ENCODE measurements at regions of chr7 and their contacts with region 1.

Region 1: DNA sequence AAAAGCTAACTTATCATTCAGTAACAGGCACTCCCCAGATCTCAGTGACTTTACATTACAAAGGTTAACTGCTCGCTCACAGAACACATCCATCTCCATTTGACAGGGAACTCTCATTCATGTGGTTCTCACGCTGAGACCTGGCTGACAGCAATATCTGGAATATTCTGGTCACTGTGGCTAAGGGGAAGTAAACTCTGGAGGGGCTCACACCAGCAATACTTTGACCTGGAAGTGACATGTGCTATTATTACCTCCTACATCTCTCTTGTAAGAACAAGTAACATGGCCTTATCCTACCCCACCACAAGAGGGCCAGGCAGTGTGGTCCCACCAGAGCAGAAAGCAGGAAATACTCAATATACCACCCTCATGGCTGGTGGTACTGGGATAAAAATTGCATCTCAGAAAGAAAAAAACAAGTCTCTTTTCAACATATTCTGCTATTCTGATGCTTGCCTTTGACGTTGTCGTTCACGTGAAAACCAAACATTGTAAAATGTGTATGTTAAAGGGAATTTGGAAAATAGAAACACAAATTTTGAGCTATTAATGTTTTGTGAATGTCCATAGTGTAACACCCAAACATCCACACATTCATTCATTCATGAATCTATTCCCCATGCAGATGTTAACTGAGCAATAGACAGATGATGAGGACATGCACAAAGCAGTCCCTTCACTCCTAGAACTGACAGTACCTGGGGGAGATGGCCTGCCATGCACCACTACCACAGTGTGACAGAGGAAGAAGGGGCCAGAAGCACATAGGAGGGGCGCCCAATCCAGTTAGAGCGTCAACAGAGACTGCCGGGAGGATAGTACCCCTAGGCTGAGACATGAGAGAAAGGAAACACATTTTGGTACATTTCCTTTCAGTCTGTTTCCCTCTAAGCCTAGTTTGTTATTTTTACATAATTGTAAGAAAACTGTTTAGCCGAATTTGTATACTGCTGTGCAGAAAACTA is 166.0 kb upstream of the SP4 start:
- DNase-seq: peak; percentile 24 to 74 (median 43)
- H3K4me3 ChIP-seq: no peak overlapping the region
- H3K4me3 Mint-ChIP-seq: no peak overlapping the region
- H3K27ac ChIP-seq: no peak overlapping the region
- H3K27ac Mint-ChIP-seq: peak overlapping the region in 4 of 8 donors; percentile 22 to 91 (median 54)
- H3K4me1 ChIP-seq: peaks cover 9% of the 10 kb centered on the region
- H3K4me1 Mint-ChIP-seq: peaks cover 11 to 13% (median 12%) of the 10 kb centered on the region in 3 donors
- H3K27me3 ChIP-seq: no peaks in the 10 kb centered on the region
- H3K27me3 Mint-ChIP-seq: no peaks in the 10 kb centered on the region

Region 2: DNA sequence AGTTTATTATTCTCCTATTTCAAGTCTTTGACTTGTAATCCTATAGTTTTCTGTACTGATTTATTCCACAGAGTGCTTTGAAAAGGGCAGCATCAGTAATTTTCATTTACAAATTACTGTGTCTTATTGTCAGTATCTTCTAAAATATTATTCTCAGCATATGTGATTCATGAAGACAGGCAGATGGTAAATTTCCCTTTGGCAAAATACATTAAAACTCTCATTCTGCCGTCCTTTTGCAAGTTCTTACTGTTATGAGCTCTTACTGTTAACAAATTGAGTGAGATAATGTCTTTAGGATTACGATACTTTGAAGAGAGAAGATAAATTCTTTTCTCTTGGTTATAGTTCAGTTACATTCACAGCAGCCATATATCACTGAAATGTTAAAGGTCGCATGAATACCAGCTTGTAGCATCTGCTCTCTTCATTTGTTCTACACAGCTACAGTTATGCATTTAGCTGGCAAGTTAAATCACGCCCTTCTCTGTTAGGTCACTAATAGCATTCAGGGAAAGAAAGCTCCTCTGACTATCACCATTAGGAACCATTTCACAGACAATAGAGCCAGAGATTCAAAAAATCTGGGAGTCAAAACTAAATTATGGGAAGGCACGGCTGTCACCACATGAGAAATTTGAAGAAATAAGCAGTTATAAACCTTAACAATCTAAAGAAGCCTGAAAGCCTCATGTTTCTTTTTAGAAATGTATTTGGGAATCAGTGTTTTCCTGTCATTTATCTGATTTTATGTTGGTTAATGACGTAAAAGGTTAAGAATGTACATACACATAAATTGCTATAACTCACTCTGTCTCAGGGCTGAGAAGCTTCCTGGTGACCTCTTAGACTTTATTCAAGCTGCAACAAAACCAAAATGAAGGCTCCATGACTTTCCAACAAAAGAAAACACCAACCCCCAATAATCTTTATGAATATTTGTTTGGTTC is 56.3 kb after region 1 on chr7:
- CTCF ChIA-PET with region 1: no interaction called
- POLR2A ChIA-PET with region 1: no interaction called
- DNase-seq: no peak
- H3K4me3 ChIP-seq: no peak overlapping the region
- H3K4me3 Mint-ChIP-seq: no peak overlapping the region
- H3K27ac ChIP-seq: no peak overlapping the region
- H3K27ac Mint-ChIP-seq: no peak overlapping the region
- H3K4me1 ChIP-seq: no peaks in the 10 kb centered on the region
- H3K4me1 Mint-ChIP-seq: peaks cover 2 to 4% (median 4%) of the 10 kb centered on the region in 3 donors
- H3K27me3 ChIP-seq: no peaks in the 10 kb centered on the region
- H3K27me3 Mint-ChIP-seq: no peaks in the 10 kb centered on the region

Region 3: GRCh38 chr7:21412410-21412851 is 150.5 kb after region 1 on chr7:
- CTCF ChIA-PET with region 1: interaction called, 11 read pairs
- POLR2A ChIA-PET with region 1: no interaction called
- DNase-seq: peak in 2 of 5 donors; percentile 45 to 46
- H3K4me3 ChIP-seq: no peak overlapping the region
- H3K4me3 Mint-ChIP-seq: peak overlapping the region; percentile 17 to 74 (median 69)
- H3K27ac ChIP-seq: no peak overlapping the region
- H3K27ac Mint-ChIP-seq: peak overlapping the region; percentile 76 to 95 (median 89)
- H3K4me1 ChIP-seq: peaks cover 25% of the 10 kb centered on the region
- H3K4me1 Mint-ChIP-seq: peaks cover 58 to 74% (median 69%) of the 10 kb centered on the region in 3 donors
- H3K27me3 ChIP-seq: no peaks in the 10 kb centered on the region
- H3K27me3 Mint-ChIP-seq: no peaks in the 10 kb centered on the region

Measured in CD8-positive, alpha-beta memory T cell (primary cell).